Motor neuron (in vitro differentiated cells): ENCODE measurements at regions of chr3 and their contacts with region 1.

Region 1: DNA sequence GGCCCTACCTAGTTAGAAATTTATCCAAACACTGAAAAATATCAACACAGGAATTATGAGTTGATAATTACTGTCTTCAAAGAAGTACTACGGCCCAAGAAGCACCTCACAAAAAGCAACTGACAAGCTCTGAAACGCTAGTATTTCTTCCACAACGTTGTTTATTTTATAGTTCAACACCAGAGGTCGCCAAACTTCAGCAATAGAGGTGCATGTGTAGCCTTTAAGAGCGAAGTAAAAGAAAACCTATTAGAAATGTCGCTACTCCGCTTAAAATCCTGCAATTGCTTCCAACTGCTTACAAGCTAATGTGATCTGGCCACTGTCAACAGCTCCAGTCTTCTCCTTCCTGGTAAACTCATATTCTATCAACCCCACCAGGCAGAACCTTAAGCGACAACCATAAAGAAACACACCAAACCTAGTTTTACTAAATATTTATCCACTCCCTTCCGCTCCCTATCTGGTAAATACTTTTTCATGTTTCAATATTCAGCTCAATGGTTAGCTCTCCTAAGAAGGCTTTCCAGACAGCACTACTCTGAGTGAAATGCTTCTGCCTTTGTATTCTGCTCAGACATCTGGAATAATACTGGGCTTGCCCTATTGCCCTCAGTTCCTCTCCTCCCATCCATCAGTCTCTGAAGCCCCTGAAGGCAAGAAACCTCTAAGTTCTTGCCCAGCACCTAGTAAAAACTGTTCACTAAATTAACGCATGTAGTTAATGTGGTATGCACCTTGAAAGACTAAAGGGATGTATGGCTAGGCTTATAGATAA is 110.2 kb downstream of the NR1I2 start:
- ATAC-seq: peak in 6 of 8 experiments; percentile 41 to 88 (median 86)
- H3K4me3 ChIP-seq: no peak overlapping the region
- H3K27ac ChIP-seq: no peak overlapping the region
- H3K4me1 ChIP-seq: no peaks in the 10 kb centered on the region

Region 2: DNA sequence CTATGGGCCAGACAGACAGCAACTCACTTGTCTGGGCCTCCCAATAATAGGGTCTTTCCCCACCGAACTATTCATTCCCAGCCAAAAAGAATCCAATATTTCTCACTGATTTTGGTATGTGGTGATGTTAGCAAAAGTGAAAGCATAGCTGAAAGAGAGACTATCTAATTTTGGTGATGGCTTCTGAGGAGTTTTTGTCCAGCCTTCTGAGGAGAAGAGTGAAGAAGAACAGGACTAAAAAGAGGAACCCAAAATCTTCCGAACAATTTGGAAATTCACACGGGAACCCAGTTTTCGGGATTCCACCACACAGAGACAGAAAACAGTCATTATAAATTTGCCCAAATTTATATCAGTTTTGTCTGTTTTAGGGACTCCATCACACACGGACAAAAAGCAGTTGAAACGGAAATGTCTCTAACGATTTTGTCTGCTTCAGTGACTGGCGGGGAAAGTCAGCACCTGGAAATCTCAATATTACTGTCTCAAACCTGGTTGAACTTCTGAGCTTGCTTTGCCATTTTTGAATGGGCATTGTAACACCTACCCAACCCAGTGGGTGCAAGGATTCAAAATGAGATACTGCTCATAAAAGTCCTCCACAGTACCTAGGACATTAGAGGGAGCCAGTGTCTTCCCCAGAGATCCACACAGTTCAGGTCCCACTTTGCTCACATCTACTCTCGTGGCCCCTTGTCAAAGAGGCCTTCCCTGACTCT is 341.8 kb before region 1 on chr3:
- in situ Hi-C with region 1: no loop called
- ATAC-seq: no peak
- H3K4me3 ChIP-seq: no peak overlapping the region
- H3K27ac ChIP-seq: no peak overlapping the region
- H3K4me1 ChIP-seq: no peaks in the 10 kb centered on the region

Region 3: GRCh38 chr3:120095226-120095978 is 203.3 kb after region 1 on chr3:
- in situ Hi-C with region 1: loop called in 1 of 9 experiments (anchors 25 kb)
- ATAC-seq: peak; percentile 23 to 54 (median 38)
- H3K4me3 ChIP-seq: peak overlapping the region; percentile 72 to 93 (median 91)
- H3K27ac ChIP-seq: peak overlapping the region; percentile 97 to 98
- H3K4me1 ChIP-seq: peaks cover 7 to 9% of the 10 kb centered on the region in 2 donors

Region 4: DNA sequence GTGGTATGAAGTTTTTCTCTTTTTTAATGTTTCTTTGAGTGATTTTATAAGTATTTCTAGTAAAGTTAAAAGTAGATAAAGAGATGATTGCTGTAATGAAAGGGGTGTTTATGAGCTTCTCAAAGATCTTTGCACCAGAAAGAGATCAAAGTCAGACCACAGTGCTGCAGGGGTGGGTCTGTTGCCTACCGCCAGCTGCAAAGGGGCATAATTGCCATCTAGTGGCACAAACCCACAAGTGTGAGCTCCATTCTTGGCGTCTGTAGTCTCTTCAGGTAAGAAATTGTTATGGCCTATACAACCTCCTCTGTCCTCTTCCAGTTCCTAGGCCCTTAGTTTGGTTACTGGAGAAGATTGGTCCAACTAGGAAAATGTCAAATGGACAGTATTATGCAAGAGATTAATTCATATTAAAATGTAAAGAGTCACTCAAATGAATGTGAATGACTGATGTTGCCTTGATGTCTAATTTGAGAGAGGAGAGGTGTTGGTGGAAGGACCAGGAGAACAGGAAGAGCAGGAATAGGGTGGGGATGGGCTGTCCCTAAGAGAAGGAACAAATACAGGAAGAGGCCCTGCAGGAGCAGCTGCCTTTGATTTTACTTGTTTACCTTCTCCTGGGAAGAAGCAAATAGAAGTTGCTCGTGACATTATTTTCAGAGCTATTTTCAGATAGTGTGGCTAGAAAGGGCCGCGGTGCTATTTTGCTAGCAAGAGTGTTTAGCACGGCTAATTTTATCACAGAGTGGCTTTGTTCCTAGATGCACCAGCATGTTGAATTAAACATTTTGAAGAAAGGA is 255.1 kb after region 1 on chr3:
- in situ Hi-C with region 1: no loop called
- ATAC-seq: peak in 1 of 8 experiments; percentile 63
- H3K4me3 ChIP-seq: no peak overlapping the region
- H3K27ac ChIP-seq: no peak overlapping the region
- H3K4me1 ChIP-seq: no peaks in the 10 kb centered on the region

Region 5: DNA sequence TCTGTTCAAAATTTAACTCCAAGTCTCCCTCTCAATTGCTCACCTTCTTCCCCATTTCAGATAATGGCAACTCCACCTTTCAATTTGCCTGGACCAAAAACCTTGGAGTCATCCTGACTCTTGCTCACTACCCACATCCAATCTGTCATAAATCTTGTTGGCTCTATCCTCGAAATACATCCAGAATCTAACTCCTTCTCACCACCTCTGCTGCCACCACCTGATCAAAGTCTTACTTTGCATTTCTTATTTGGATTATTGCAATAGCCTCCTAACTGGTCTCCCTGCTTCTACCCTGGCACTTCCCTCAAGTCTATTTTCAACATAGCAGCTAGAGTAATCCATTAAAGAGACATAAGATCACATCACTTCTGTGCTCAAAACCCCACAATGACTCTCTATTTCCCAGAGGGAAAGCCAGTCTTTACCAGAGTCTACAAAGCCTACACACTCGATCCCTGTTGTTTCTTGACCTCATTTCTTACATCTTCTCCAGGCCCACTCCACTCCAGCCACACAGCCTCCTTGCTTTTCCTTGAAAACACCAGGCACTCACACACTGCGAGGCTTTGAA is 306.3 kb after region 1 on chr3:
- in situ Hi-C with region 1: loop called in 3 of 9 experiments (anchors 25 kb)
- ATAC-seq: peak in 5 of 8 experiments; percentile 27 to 44 (median 30)
- H3K4me3 ChIP-seq: no peak overlapping the region
- H3K27ac ChIP-seq: no peak overlapping the region
- H3K4me1 ChIP-seq: peaks cover 30 to 36% of the 10 kb centered on the region in 2 donors

Region 6: DNA sequence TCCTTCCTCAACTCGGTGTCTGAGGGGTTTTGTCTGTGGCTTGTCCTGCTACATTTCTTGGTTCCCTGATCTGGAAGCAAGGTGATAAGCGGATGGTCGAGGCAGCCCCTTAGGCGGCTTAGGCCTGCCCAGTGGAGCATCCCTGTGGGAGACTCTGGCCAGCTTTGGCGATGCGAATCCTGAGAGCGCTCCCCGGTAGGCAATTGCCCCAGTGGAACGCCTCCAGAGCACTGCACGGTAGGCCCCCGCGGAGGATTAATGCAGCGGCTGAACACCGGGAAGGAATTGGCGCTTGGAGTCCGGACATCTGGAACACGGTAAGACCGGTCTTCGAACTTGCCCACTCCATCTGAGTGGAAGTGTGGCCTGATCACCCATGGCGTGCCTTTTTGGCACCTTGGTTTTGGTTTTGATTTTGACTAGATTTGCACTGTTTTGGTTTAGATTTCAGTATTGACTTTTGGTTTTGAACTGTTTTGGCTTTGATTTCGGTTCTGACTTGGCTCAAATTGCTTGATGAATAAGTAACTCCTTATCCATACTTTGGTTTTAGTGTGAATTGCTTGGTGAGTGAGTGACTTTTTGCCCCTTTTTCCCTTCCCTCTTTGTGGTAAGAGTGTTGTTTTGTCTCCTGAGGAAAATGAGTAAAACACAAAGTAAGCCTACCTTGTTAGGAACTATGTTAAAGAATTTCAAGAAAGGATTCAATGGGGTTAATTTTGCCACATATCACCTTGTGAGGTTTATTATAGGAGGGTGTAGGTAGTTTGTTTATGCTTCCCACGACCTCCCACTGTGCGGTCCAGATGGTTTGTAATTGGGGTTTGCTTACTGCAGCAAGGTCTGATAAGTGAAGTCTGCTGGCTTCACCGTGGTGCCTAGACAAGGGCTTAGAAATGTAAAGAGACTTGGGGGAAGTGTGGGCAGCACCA is 420.0 kb after region 1 on chr3:
- in situ Hi-C with region 1: no loop called
- ATAC-seq: no peak
- H3K4me3 ChIP-seq: no peak overlapping the region
- H3K27ac ChIP-seq: no peak overlapping the region
- H3K4me1 ChIP-seq: no peaks in the 10 kb centered on the region